Prostate gland (tissue), 2 donors: ENCODE measurements at regions of chr3 and their contacts with region 1.

Region 1: DNA sequence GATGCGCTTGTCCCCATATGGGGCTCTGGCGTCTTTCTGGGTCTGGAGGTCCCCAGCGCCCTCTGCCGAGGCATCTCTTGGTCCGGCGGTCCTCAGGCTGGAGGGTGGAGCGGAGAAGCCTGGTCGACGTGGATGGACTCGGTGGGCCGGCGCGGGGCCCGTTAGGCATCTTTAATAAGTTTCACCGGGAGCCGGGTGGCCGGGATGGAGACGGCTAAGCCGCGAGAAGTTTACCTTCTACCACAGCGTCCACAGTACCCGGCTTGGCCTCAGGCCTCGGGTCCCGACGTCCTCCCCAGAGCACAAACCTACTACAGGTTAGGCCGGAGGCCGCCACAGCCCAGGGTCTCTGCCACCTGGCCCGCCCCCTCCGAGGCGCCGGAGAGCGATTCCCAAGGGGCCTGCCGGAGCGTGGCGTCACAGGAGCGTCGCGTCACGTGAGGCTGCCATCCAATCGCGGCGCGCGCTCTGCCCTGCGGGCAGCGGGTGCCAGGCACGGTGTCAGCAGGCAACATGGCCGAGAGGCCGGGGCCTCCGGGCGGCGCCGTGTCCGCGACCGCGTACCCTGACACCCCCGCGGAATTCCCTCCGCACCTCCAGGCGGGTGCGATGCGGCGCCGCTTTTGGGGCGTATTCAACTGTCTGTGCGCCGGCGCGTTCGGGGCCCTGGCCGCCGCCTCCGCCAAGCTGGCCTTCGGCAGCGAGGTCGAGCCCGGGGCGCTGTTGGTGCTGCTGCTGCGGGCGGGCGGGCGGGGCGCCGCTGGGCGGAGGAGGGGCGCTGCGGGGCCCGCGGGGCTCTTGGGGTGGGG is at the start of gene TMEM42:
- DNase-seq: peak; percentile 87
- H3K4me3 ChIP-seq: peak within 1 kb of the TSS; percentile 74 to 84
- H3K27ac ChIP-seq: peak within 1 kb of the TSS; percentile 79 to 86
- H3K4me1 ChIP-seq: peaks cover 6% of the 10 kb centered on the region
- H3K27me3 ChIP-seq: no peaks in the 10 kb centered on the region
- CTCF ChIP-seq: peak in 2 of 4 experiments; percentile 25 to 33
- POLR2A ChIP-seq: peak; percentile 86
- total RNA-seq, gene TMEM42: 19.1 to 27.1 TPM

Region 2: DNA sequence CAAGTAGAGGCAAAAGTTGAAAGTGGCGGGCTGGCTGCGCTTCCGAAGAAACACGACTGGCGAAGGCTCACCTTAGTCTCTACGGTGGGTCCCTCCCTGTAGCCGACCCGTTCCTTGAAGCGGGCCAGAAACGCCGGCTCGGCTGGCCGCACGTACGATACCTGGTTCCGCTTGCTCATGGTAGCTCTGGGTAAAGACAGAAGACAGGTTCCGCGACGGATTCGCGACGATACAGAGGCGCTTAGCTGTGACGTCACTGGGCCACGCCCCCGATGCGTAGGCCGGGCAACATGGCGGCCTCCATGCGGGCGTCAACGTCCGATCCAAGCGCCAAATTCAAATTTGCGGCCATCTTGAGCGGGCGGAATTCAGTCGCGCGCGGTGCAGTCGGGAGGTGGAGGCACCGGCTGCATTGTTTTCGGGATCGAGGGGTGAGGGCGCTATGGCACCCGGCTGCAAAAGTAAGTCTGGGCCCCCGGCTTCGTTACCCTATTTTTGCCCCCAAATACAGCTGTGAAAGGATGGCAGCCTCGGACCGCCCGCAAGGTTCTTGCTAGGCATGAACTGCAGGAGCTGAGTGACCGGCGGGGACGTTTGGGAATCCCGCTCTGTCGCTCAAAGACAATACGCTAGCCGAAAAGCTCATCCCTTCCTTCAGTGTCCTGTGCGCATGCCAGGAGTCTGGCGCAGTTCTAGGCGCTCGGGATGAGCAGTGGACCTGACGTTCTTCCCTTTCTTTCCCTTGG is 100.0 kb before region 1 on chr3 and contains the starts of genes KIAA1143 and KIF15:
- intact Hi-C with region 1: loop called (anchors 10 kb)
- DNase-seq: peak; percentile 94
- H3K4me3 ChIP-seq: peak within 1 kb of the TSS; percentile 64 to 77
- H3K27ac ChIP-seq: peak within 1 kb of the TSS; percentile 63 to 71
- H3K4me1 ChIP-seq: peaks cover 3% of the 10 kb centered on the region
- H3K27me3 ChIP-seq: no peaks in the 10 kb centered on the region
- CTCF ChIP-seq: peak in 2 of 4 experiments; percentile 14 to 27
- POLR2A ChIP-seq: peak; percentile 33
- total RNA-seq, gene KIAA1143: 23.6 to 24.4 TPM
- total RNA-seq, gene KIF15: 0.55 to 4.8 TPM